HEK293 (cell line): ENCODE measurements at regions of chr19 and their contacts with region 1.

Region 1: GRCh38 chr19:35879770-35880317 is 11.5 kb downstream of the APLP1 start:
- H3K4me3 ChIP-seq: no peak overlapping the region
- H3K27ac ChIP-seq: no peak overlapping the region
- H3K4me1 ChIP-seq: peaks cover 7% of the 10 kb centered on the region
- CTCF ChIP-seq: no peak

Region 2: DNA sequence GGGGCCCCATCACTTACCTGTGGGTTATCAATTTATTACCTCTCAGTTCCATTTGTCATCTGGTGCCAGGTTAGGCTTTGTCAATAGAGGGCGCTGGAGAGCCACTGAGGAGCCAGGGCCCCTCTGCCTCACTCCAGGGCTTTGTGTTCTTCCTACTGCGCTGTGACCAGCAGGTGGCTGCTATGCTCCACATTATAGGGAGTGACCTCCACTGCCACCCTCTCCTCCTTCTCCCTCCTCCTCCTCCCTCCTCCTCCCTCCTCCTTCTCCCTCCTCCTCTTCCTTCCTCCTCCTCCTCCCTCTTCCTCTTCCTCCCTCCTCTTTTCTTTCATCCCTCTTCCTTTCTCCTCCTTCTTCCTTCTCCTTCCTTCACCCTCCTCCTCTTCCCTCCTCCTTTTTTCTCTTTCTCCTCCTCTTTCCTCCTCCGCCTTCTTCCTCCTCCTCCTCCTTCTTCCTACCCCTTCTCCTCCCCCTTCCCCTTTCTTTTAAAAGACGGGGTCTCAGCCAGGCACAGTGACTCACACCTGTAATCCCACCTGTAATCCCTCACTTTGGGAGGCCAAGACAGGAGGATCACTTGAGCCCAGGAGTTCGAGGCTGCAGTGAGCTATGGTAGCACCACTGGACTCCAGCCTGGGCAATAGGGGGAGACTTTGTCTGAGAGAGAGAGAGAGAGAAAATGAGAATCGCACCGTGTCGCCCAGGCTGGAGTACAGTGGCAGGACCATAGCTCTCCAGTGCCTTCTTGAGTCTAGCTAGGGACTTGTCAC is 185.8 kb before region 1 on chr19:
- CTCF ChIA-PET with region 1: interaction called, 10 read pairs
- POLR2A ChIA-PET with region 1: interaction called, 4 read pairs
- H3K4me3 ChIP-seq: no peak overlapping the region
- H3K27ac ChIP-seq: no peak overlapping the region
- H3K4me1 ChIP-seq: no peaks in the 10 kb centered on the region
- CTCF ChIP-seq: peak; percentile 100

Region 3: GRCh38 chr19:35797663-35798062 is 82.2 kb before region 1 on chr19:
- CTCF ChIA-PET with region 1: no interaction called
- POLR2A ChIA-PET with region 1: no interaction called
- H3K4me3 ChIP-seq: no peak overlapping the region
- H3K27ac ChIP-seq: no peak overlapping the region
- H3K4me1 ChIP-seq: no peaks in the 10 kb centered on the region
- CTCF ChIP-seq: no peak

Region 4: GRCh38 chr19:35869327-35870123 is 10.3 kb before region 1 on chr19:
- CTCF ChIA-PET with region 1: interaction called, 12 read pairs
- POLR2A ChIA-PET with region 1: interaction called, 25 read pairs
- H3K4me3 ChIP-seq: peak overlapping the region; percentile 16; the same call in 1 of the 2 replicates
- H3K27ac ChIP-seq: peak overlapping the region; percentile 34; the same call in 1 of the 2 replicates
- H3K4me1 ChIP-seq: peaks cover 16% of the 10 kb centered on the region
- CTCF ChIP-seq: 0 out of 2 replicates have a peak, but pooled peaks have one; percentile 52

Region 5: DNA sequence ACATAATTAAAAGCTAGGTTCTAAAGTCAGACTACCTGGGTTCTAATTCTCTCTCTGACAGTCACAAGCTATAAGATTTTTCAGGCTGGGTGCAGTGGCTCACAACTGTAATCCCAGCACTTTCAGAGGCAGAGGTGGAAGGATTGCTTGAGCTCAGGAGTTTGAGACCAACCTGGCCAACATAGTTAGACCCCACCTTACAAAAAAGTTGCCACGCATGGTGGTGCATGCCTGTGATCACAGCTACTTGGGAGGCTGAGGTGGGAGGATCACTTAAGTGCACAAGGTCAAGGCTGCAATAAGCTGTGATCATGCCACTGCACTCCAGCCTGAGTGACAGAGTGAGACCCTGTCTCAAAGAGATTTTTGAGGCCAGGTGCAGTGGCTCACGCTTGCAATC is 14.5 kb after region 1 on chr19:
- CTCF ChIA-PET with region 1: interaction called, 66 read pairs
- POLR2A ChIA-PET with region 1: interaction called, 6 read pairs
- H3K4me3 ChIP-seq: no peak overlapping the region
- H3K27ac ChIP-seq: no peak overlapping the region
- H3K4me1 ChIP-seq: peaks cover 5% of the 10 kb centered on the region
- CTCF ChIP-seq: no peak

Region 6: DNA sequence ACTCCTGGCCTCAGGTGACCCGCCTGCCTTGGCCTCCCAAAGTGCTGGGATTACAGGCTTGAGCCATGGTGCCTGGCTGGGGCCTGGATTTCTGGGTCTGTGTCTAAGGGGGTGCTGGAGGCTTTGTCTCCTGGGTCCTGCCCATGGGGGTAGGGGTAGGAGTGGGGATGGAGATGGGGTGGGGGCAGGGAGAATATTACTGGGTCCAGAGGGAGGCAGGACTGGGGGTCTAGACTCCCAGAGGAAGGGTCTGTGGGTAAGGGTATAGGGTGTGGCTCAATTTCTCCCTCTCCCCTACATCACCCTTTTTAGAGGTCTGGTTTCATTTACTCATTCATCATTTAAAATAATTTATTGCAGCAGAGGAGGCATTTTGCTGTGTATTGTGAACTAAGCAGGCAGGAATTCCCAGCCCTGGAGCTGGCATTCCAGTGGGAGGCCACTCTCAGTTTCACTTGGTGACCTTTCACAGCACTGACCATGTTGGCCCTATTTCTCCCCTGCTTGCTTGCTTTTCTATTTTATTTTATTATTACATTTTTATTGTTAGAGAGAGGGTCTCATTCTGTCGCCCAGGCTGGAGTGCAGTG is 21.3 kb after region 1 on chr19:
- CTCF ChIA-PET with region 1: interaction called, 5 read pairs
- POLR2A ChIA-PET with region 1: interaction called, 10 read pairs
- H3K4me3 ChIP-seq: no peak overlapping the region
- H3K27ac ChIP-seq: no peak overlapping the region
- H3K4me1 ChIP-seq: peaks cover 14% of the 10 kb centered on the region
- CTCF ChIP-seq: no peak

Region 7: DNA sequence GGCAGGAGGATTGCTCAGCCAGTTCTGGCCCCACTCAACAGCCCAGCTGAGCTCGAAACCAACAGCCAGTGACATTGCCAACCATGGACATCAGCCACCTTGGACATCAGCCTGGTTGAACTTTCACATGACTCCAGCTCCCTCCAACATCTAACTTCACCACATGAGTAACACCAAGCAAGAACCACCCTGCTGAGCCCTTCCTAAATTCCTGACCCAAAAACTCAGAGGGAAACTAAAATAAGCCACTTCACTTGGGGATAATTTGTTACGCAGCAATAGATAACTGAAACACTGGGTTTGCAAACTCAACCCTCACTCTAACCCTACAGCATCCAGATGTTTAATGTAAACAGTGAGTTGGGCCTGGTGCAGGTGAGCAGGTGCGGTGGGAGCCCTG is 45.7 kb after region 1 on chr19:
- CTCF ChIA-PET with region 1: interaction called, 185 read pairs
- POLR2A ChIA-PET with region 1: no interaction called
- H3K4me3 ChIP-seq: no peak overlapping the region
- H3K27ac ChIP-seq: no peak overlapping the region
- H3K4me1 ChIP-seq: no peaks in the 10 kb centered on the region
- CTCF ChIP-seq: no peak

Region 8: DNA sequence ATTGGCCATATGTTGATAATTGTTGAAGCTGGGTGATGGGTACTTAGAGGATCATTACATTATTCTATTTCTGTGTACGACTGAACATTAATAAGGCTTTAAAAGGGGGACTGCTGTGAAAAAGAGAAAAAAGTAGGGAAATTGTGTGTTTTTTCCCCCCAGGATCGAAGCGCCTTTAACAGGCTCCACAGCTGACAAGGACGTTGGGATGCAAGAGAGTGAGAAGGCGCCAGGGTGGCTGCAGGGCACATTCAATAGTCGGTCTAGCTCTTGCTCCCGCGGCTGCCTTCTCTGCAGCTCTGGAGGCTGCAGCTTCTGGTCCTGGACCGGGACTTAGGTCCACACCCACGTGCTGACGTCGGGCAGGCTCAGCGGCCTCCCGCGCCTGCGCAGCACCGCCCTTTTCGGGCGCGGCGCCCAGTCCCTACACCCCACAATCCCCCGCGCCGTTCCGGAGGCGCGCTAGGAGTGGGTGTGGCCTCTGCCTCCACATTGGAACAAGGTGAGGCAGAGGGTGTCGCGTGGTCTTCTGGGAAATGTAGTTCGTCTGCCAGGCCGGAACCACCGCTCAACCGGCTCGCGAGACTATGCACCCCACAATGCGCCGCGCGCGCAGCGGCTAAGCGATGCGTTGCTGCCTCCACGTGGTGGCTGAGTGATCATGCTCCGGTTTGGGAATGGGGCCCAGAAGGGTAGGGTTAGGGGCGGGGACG is 51.5 kb after region 1 on chr19:
- CTCF ChIA-PET with region 1: interaction called, 185 read pairs
- POLR2A ChIA-PET with region 1: interaction called, 23 read pairs
- H3K4me3 ChIP-seq: peak overlapping the region; percentile 12
- H3K27ac ChIP-seq: peak overlapping the region; percentile 33; the same call in 1 of the 2 replicates
- H3K4me1 ChIP-seq: peaks cover 11% of the 10 kb centered on the region
- CTCF ChIP-seq: peak; percentile 100

Region 9: GRCh38 chr19:36067681-36068080 is 187.8 kb after region 1 on chr19:
- CTCF ChIA-PET with region 1: no interaction called
- POLR2A ChIA-PET with region 1: no interaction called
- H3K4me3 ChIP-seq: no peak overlapping the region
- H3K27ac ChIP-seq: peak overlapping the region; percentile 56
- H3K4me1 ChIP-seq: peaks cover 31% of the 10 kb centered on the region
- CTCF ChIP-seq: no peak